ENCODE measurements at regions of chr11 and their contacts with region 1.

Region 1: GRCh38 chr11:119205574-119206510 is at the start of gene CBL:
- DNase-seq: peak; percentile 98
- ATAC-seq: peak; percentile 79
- H3K4me3 Mint-ChIP-seq: peak within 1 kb of the TSS; percentile 95
- H3K27ac Mint-ChIP-seq: peak within 1 kb of the TSS; percentile 96
- H3K4me1 Mint-ChIP-seq: peaks cover 39% of the 10 kb centered on the region
- H3K27me3 Mint-ChIP-seq: no peaks in the 10 kb centered on the region
- CTCF ChIP-seq: peak; percentile 78
- total RNA-seq, gene CBL: 45.6 to 47.9 TPM (median 46.7 TPM) in 3 replicates

Region 2: GRCh38 chr11:119168471-119169281 is 37.2 kb before region 1 on chr11 and contains the start of gene NLRX1:
- CTCF ChIA-PET with region 1: interaction called, 20 read pairs
- POLR2A ChIA-PET with region 1: interaction called, 4 read pairs
- DNase-seq: peak; percentile 83
- ATAC-seq: peak; percentile 72
- H3K4me3 Mint-ChIP-seq: peak within 1 kb of the TSS; percentile 83
- H3K27ac Mint-ChIP-seq: peak within 1 kb of the TSS; percentile 95
- H3K4me1 Mint-ChIP-seq: peaks cover 26% of the 10 kb centered on the region
- H3K27me3 Mint-ChIP-seq: no peaks in the 10 kb centered on the region
- CTCF ChIP-seq: peak; percentile 43; the same call in 1 of the 2 replicates
- total RNA-seq, gene NLRX1: 19.9 to 23.2 TPM (median 20.8 TPM) in 3 replicates

Region 3: GRCh38 chr11:119251114-119251513 is 45.3 kb after region 1 on chr11:
- CTCF ChIA-PET with region 1: no interaction called
- POLR2A ChIA-PET with region 1: no interaction called
- DNase-seq: no peak
- ATAC-seq: no peak
- H3K4me3 Mint-ChIP-seq: no peak overlapping the region
- H3K27ac Mint-ChIP-seq: peak overlapping the region; percentile 72
- H3K4me1 Mint-ChIP-seq: no peaks in the 10 kb centered on the region
- H3K27me3 Mint-ChIP-seq: no peaks in the 10 kb centered on the region
- CTCF ChIP-seq: no peak

Region 4: DNA sequence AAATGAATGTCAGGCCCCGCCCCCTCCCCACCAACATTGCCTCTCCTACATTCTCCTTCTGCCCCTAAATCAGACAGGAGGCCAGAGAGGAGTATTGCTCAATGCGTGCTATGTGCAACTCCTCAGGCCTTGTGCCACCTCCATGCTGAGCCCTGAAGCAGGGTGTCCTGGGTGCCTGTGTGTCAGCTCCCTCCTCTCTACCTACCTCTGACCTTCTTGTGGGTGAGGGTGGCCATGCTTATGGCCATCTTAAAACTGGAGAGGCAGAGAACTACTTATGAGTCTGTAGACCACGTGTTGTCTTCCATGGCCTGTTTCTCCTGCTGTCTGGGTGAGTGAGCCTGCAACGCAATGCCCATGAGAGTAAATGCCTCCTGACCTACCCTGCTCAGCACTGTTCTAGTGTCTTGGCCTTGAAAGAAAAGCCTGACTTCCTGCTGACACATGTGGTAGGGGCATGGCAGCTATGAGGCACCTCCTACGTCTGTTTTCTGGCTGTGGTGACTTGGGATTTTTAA is 100.6 kb after region 1 on chr11:
- CTCF ChIA-PET with region 1: interaction called, 14 read pairs
- POLR2A ChIA-PET with region 1: interaction called, 4 read pairs
- DNase-seq: no peak
- ATAC-seq: peak; percentile 14; the same call in 1 of the 2 replicates
- H3K4me3 Mint-ChIP-seq: no peak overlapping the region
- H3K27ac Mint-ChIP-seq: peak overlapping the region; percentile 64; the same call in 1 of the 2 replicates
- H3K4me1 Mint-ChIP-seq: peaks cover 14% of the 10 kb centered on the region
- H3K27me3 Mint-ChIP-seq: no peaks in the 10 kb centered on the region
- CTCF ChIP-seq: no peak

Region 5: GRCh38 chr11:119315131-119316015 is 109.5 kb after region 1 on chr11:
- CTCF ChIA-PET with region 1: interaction called, 16 read pairs
- POLR2A ChIA-PET with region 1: interaction called, 5 read pairs
- DNase-seq: peak; percentile 74
- ATAC-seq: peak; percentile 29
- H3K4me3 Mint-ChIP-seq: peak overlapping the region; percentile 69
- H3K27ac Mint-ChIP-seq: no peak overlapping the region
- H3K4me1 Mint-ChIP-seq: peaks cover 37% of the 10 kb centered on the region
- H3K27me3 Mint-ChIP-seq: peaks cover 44% of the 10 kb centered on the region
- CTCF ChIP-seq: no peak

Region 6: GRCh38 chr11:119339589-119340343 is 133.9 kb after region 1 on chr11:
- CTCF ChIA-PET with region 1: interaction called, 18 read pairs
- POLR2A ChIA-PET with region 1: interaction called, 4 read pairs
- DNase-seq: peak; percentile 85
- ATAC-seq: peak; percentile 12
- H3K4me3 Mint-ChIP-seq: peak overlapping the region; percentile 100
- H3K27ac Mint-ChIP-seq: no peak overlapping the region
- H3K4me1 Mint-ChIP-seq: peaks cover 52% of the 10 kb centered on the region
- H3K27me3 Mint-ChIP-seq: peaks cover 53% of the 10 kb centered on the region
- CTCF ChIP-seq: peak; percentile 97

Measured in WTC11 (cell line).